ENCODE measurements at regions of chr10 and their contacts with region 1.

Region 1: GRCh38 chr10:132575356-132576201 is 38.0 kb downstream of the INPP5A start:
- DNase-seq: peak; percentile 76
- ATAC-seq: peak; percentile 43

Region 2: GRCh38 chr10:132458593-132459300 is 116.8 kb before region 1 on chr10:
- intact Hi-C with region 1: loop called (anchors 1 kb)
- DNase-seq: peak; percentile 90
- ATAC-seq: peak; percentile 60

Measured in Right ventricle myocardium inferior (tissue), 1 donor.